Activated CD4-positive, alpha-beta T cell treated with anti-CD3 and anti-CD28 coated beads for 36 hours (primary cell): ENCODE measurements at regions of chr12 and their contacts with region 1.

Region 1: GRCh38 chr12:117836999-117837736 is 131.6 kb downstream of the KSR2 start:
- DNase-seq: peak; percentile 89
- ATAC-seq: peak; percentile 83
- H3K4me3 Mint-ChIP-seq: no peak overlapping the region
- H3K27ac Mint-ChIP-seq: no peak overlapping the region
- H3K4me1 Mint-ChIP-seq: peaks cover 6% of the 10 kb centered on the region
- H3K27me3 Mint-ChIP-seq: peaks cover 19% of the 10 kb centered on the region

Region 2: GRCh38 chr12:117212563-117213190 is 624.5 kb before region 1 on chr12:
- CTCF ChIA-PET with region 1: interaction called, 22 read pairs
- POLR2A ChIA-PET with region 1: no interaction called
- intact Hi-C with region 1: loop called (anchors 1 kb)
- DNase-seq: peak; percentile 80
- ATAC-seq: peak; percentile 64
- H3K4me3 Mint-ChIP-seq: no peak overlapping the region
- H3K27ac Mint-ChIP-seq: no peak overlapping the region
- H3K4me1 Mint-ChIP-seq: no peaks in the 10 kb centered on the region
- H3K27me3 Mint-ChIP-seq: peaks cover 10% of the 10 kb centered on the region

Region 3: GRCh38 chr12:117367011-117367638 is 470.0 kb before region 1 on chr12:
- CTCF ChIA-PET with region 1: interaction called, 35 read pairs
- POLR2A ChIA-PET with region 1: no interaction called
- intact Hi-C with region 1: loop called (anchors 1 kb)
- DNase-seq: peak; percentile 77
- ATAC-seq: no peak
- H3K4me3 Mint-ChIP-seq: no peak overlapping the region
- H3K27ac Mint-ChIP-seq: no peak overlapping the region
- H3K4me1 Mint-ChIP-seq: no peaks in the 10 kb centered on the region
- H3K27me3 Mint-ChIP-seq: peaks cover 37% of the 10 kb centered on the region

Region 4: DNA sequence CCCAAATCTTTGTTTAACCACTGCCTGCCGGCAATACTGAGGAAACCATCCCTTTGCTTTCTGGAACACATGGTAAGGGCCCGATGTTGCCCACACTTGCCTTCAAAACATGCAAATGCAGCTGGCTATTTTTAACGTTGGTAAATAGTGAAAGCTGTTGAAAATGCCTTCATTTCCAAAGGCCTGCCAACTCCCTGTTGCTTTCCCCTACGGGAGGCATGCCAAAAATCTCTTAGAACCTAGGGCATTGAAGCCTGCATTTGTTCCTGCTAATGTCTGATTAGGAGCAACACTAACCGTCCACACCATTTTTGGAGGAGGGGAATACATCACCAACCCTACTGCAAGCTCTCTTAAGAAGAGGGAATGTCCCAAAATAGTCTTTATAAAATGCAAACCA is 323.2 kb before region 1 on chr12:
- CTCF ChIA-PET with region 1: no interaction called
- POLR2A ChIA-PET with region 1: no interaction called
- intact Hi-C with region 1: no loop called
- DNase-seq: no peak
- ATAC-seq: no peak
- H3K4me3 Mint-ChIP-seq: no peak overlapping the region
- H3K27ac Mint-ChIP-seq: no peak overlapping the region
- H3K4me1 Mint-ChIP-seq: no peaks in the 10 kb centered on the region
- H3K27me3 Mint-ChIP-seq: peaks cover 4% of the 10 kb centered on the region

Region 5: GRCh38 chr12:117603316-117604113 is 233.7 kb before region 1 on chr12:
- CTCF ChIA-PET with region 1: no interaction called
- POLR2A ChIA-PET with region 1: no interaction called
- intact Hi-C with region 1: loop called in 1 of 2 experiments (anchors 10 kb)
- DNase-seq: no peak
- ATAC-seq: no peak
- H3K4me3 Mint-ChIP-seq: no peak overlapping the region
- H3K27ac Mint-ChIP-seq: no peak overlapping the region
- H3K4me1 Mint-ChIP-seq: no peaks in the 10 kb centered on the region
- H3K27me3 Mint-ChIP-seq: peaks cover 3% of the 10 kb centered on the region

Region 6: GRCh38 chr12:117857632-117858612 is 20.8 kb after region 1 on chr12:
- CTCF ChIA-PET with region 1: interaction called, 10 read pairs
- POLR2A ChIA-PET with region 1: no interaction called
- intact Hi-C with region 1: no loop called
- DNase-seq: peak; percentile 82
- ATAC-seq: peak; percentile 61
- H3K4me3 Mint-ChIP-seq: no peak overlapping the region
- H3K27ac Mint-ChIP-seq: no peak overlapping the region
- H3K4me1 Mint-ChIP-seq: peaks cover 2% of the 10 kb centered on the region
- H3K27me3 Mint-ChIP-seq: peaks cover 2% of the 10 kb centered on the region

Region 7: DNA sequence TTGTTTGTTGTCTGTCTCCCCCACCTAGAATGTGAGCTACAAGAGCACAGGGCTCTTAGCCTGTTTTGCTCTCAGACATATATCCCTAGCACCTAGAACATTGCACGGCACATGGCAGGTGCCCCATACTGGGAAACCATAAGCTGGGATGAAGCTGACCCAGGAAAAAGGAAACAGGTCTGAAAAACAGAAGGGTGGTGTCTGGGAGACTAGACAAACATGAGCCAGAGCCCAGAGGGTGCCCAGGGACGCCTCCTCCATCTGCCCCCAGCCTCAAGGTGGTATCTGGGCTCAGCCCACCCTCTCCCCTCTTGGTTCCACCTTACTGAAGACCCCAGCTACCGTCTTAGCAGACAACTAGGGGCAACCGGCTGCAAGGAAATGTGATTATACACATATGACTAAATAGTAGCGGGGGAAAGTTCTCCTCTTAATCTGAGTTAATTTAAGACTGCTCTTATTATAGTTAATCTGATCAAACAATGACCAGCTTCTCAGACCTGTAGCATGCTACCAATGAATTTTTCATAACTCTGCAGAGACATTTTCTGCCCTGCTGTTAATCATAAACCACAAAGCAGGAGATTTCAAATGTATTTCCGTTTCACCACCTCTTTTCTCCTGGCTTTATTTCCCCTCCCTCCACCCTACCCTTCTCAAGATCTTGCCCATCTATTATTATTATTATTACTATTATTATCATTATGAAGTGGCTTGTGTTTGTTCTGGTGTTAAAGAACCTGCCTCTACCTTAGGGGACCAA is 99.7 kb after region 1 on chr12:
- CTCF ChIA-PET with region 1: no interaction called
- POLR2A ChIA-PET with region 1: no interaction called
- intact Hi-C with region 1: no loop called
- DNase-seq: no peak
- ATAC-seq: no peak
- H3K4me3 Mint-ChIP-seq: no peak overlapping the region
- H3K27ac Mint-ChIP-seq: no peak overlapping the region
- H3K4me1 Mint-ChIP-seq: no peaks in the 10 kb centered on the region
- H3K27me3 Mint-ChIP-seq: peaks cover 14% of the 10 kb centered on the region

Region 8: GRCh38 chr12:118035246-118036041 is 198.3 kb after region 1 on chr12:
- CTCF ChIA-PET with region 1: no interaction called
- POLR2A ChIA-PET with region 1: no interaction called
- intact Hi-C with region 1: no loop called
- DNase-seq: peak; percentile 60
- ATAC-seq: peak; percentile 89
- H3K4me3 Mint-ChIP-seq: peak overlapping the region; percentile 22
- H3K27ac Mint-ChIP-seq: peak overlapping the region; percentile 89
- H3K4me1 Mint-ChIP-seq: peaks cover 55% of the 10 kb centered on the region
- H3K27me3 Mint-ChIP-seq: no peaks in the 10 kb centered on the region

Region 9: GRCh38 chr12:119319638-119320037 is 1482.5 kb after region 1 on chr12:
- CTCF ChIA-PET with region 1: no interaction called
- POLR2A ChIA-PET with region 1: no interaction called
- intact Hi-C with region 1: no loop called
- DNase-seq: no peak
- ATAC-seq: no peak
- H3K4me3 Mint-ChIP-seq: no peak overlapping the region
- H3K27ac Mint-ChIP-seq: no peak overlapping the region
- H3K4me1 Mint-ChIP-seq: no peaks in the 10 kb centered on the region
- H3K27me3 Mint-ChIP-seq: peaks cover 19% of the 10 kb centered on the region